SK-N-SH (cell line): ENCODE measurements at regions of chr10 and their contacts with region 1.

Region 1: DNA sequence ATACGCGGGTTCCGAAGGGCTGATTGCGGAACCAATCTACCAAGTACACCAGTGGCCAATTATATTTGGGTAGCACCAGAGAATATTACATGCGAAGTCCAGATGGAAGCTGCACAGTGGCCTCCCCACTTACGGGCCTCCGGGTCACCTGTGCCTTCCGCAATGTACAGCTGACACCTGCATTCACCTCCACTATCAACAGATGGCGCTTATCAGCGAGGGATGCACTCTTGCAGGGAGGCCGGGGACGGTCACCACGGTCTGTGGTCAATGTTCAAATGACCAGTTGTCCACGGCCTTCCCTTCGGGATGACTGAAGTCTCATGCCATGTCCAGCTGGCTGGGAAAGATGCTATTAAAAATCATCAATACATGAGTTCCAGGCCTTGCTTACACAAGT is 47.6 kb downstream of the SLIT1 start:
- DNase-seq: no peak
- H3K4me3 ChIP-seq: no peak overlapping the region
- H3K27ac ChIP-seq: no peak overlapping the region
- H3K4me1 ChIP-seq: peaks cover 0 to 29% of the 10 kb centered on the region in 2 experiments; a peak in 2 of 4 replicates
- H3K27me3 ChIP-seq: peaks cover 23% of the 10 kb centered on the region
- CTCF ChIP-seq: no peak
- EP300 ChIP-seq: no peak
- RAD21 ChIP-seq: peak; percentile 37

Region 2: GRCh38 chr10:97117372-97117771 is 20.8 kb before region 1 on chr10:
- CTCF ChIA-PET with region 1: interaction called, 14 read pairs
- POLR2A ChIA-PET with region 1: no interaction called
- DNase-seq: no peak
- H3K4me3 ChIP-seq: no peak overlapping the region
- H3K27ac ChIP-seq: no peak overlapping the region
- H3K4me1 ChIP-seq: peaks cover 0 to 13% of the 10 kb centered on the region in 2 experiments; a peak in 1 of 4 replicates
- H3K27me3 ChIP-seq: peaks cover 3% of the 10 kb centered on the region; the same call in 1 of the 2 replicates
- CTCF ChIP-seq: no peak
- EP300 ChIP-seq: no peak
- RAD21 ChIP-seq: peak; percentile 37; the same call in 1 of the 2 replicates

Region 3: GRCh38 chr10:97355571-97355975 is 217.4 kb after region 1 on chr10:
- CTCF ChIA-PET with region 1: no interaction called
- POLR2A ChIA-PET with region 1: no interaction called
- DNase-seq: no peak
- H3K4me3 ChIP-seq: no peak overlapping the region
- H3K27ac ChIP-seq: no peak overlapping the region
- H3K4me1 ChIP-seq: peaks cover 0 to 6% of the 10 kb centered on the region in 2 experiments; a peak in 1 of 4 replicates
- H3K27me3 ChIP-seq: no peaks in the 10 kb centered on the region
- CTCF ChIP-seq: peak; percentile 43
- EP300 ChIP-seq: no peak
- RAD21 ChIP-seq: peak; percentile 59

Region 4: DNA sequence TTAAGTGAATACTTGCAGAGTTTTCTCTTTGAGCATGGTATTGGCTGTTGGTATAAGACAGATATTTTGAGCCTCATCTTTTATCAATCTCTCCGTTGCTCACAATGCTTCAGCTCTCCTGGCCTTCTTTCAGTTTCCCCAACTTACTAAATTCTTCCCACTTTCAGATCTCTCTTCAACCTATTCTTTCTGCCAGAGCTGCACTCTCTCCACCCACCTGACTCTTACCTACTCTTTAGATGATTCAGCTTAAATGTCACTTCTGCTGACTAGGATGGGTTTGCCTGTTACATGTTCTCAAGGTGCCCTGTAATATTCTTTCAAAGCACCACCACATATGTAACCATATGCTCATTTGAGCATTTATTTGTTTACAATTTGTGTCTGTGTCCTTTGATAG is 306.0 kb after region 1 on chr10:
- CTCF ChIA-PET with region 1: no interaction called
- POLR2A ChIA-PET with region 1: no interaction called
- DNase-seq: no peak
- H3K4me3 ChIP-seq: no peak overlapping the region
- H3K27ac ChIP-seq: no peak overlapping the region
- H3K4me1 ChIP-seq: peaks cover 7 to 9% of the 10 kb centered on the region in 2 experiments; a peak in 3 of 4 replicates
- H3K27me3 ChIP-seq: no peaks in the 10 kb centered on the region
- CTCF ChIP-seq: no peak
- EP300 ChIP-seq: no peak
- RAD21 ChIP-seq: no peak

Region 5: GRCh38 chr10:97454330-97455036 is 316.3 kb after region 1 on chr10:
- CTCF ChIA-PET with region 1: no interaction called
- POLR2A ChIA-PET with region 1: no interaction called
- DNase-seq: no peak
- H3K4me3 ChIP-seq: no peak overlapping the region
- H3K27ac ChIP-seq: no peak overlapping the region; a peak in 1 of 4 replicates
- H3K4me1 ChIP-seq: no peaks in the 10 kb centered on the region; a peak in 1 of 4 replicates
- H3K27me3 ChIP-seq: no peaks in the 10 kb centered on the region
- CTCF ChIP-seq: no peak
- EP300 ChIP-seq: no peak
- RAD21 ChIP-seq: no peak